Activated CD4-positive, alpha-beta T cell treated with anti-CD3 and anti-CD28 coated beads, Interleukin-2, amount 10 ng/mL, durations not matched to agents 24 days and 14 days (primary cell): ENCODE measurements at regions of chr9 and their contacts with region 1.

Region 1: GRCh38 chr9:112037281-112038016 is 137.6 kb downstream of the SUSD1 start:
- DNase-seq: peak; percentile 92
- H3K4me3 Mint-ChIP-seq: peak overlapping the region; percentile 52
- H3K27ac Mint-ChIP-seq: peak overlapping the region; percentile 88
- H3K4me1 Mint-ChIP-seq: peaks cover 45% of the 10 kb centered on the region
- H3K27me3 Mint-ChIP-seq: peaks cover 17% of the 10 kb centered on the region

Region 2: GRCh38 chr9:111903996-111904395 is 133.5 kb before region 1 on chr9:
- intact Hi-C with region 1: no loop called
- DNase-seq: no peak
- H3K4me3 Mint-ChIP-seq: no peak overlapping the region
- H3K27ac Mint-ChIP-seq: no peak overlapping the region
- H3K4me1 Mint-ChIP-seq: peaks cover 33% of the 10 kb centered on the region
- H3K27me3 Mint-ChIP-seq: no peaks in the 10 kb centered on the region

Region 3: DNA sequence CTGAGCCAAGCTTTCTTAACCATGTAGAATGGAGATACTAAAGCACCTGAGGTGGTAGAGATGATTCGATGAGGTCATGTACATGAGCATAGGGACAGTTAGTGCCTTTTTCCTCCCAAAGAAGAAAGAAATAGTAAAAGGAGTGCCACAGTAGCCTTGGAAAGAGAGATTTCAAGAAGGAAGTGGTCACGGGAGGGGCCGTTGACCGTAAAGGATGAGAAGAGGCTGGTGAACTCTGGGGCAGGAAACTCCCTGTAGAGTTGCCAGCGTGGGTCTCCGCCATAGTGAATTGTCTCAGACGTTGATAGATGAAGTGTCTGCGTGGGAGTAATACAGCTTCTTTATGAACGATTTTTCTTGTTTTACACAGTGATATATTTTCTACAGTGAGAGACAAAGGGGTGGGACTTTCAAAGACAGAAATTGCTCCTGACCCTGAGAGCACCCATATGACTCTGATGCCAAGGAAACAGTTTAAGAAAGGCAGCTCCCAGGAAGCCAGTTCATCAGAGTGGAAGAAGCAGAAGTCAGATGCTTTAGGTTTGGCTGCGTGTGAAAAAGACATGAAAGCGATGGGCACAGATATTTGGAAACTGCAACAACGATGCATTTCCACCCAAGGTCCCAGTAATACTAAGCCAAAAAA is 99.5 kb before region 1 on chr9:
- intact Hi-C with region 1: loop called (anchors 2 kb)
- DNase-seq: peak; percentile 84
- H3K4me3 Mint-ChIP-seq: peak overlapping the region; percentile 45
- H3K27ac Mint-ChIP-seq: peak overlapping the region; percentile 83
- H3K4me1 Mint-ChIP-seq: peaks cover 22% of the 10 kb centered on the region
- H3K27me3 Mint-ChIP-seq: peaks cover 2% of the 10 kb centered on the region

Region 4: GRCh38 chr9:111994831-111995458 is 42.5 kb before region 1 on chr9:
- intact Hi-C with region 1: loop called (anchors 1 kb)
- DNase-seq: no peak
- H3K4me3 Mint-ChIP-seq: peak overlapping the region; percentile 34
- H3K27ac Mint-ChIP-seq: peak overlapping the region; percentile 76
- H3K4me1 Mint-ChIP-seq: peaks cover 23% of the 10 kb centered on the region
- H3K27me3 Mint-ChIP-seq: peaks cover 17% of the 10 kb centered on the region

Region 5: GRCh38 chr9:112061152-112061740 is 23.8 kb after region 1 on chr9:
- intact Hi-C with region 1: loop called (anchors 1 kb)
- DNase-seq: peak; percentile 82
- H3K4me3 Mint-ChIP-seq: no peak overlapping the region
- H3K27ac Mint-ChIP-seq: peak overlapping the region; percentile 48
- H3K4me1 Mint-ChIP-seq: peaks cover 22% of the 10 kb centered on the region
- H3K27me3 Mint-ChIP-seq: no peaks in the 10 kb centered on the region